GM18951 (cell line): ENCODE measurements at regions of chr19 and their contacts with region 1.

Region 1: DNA sequence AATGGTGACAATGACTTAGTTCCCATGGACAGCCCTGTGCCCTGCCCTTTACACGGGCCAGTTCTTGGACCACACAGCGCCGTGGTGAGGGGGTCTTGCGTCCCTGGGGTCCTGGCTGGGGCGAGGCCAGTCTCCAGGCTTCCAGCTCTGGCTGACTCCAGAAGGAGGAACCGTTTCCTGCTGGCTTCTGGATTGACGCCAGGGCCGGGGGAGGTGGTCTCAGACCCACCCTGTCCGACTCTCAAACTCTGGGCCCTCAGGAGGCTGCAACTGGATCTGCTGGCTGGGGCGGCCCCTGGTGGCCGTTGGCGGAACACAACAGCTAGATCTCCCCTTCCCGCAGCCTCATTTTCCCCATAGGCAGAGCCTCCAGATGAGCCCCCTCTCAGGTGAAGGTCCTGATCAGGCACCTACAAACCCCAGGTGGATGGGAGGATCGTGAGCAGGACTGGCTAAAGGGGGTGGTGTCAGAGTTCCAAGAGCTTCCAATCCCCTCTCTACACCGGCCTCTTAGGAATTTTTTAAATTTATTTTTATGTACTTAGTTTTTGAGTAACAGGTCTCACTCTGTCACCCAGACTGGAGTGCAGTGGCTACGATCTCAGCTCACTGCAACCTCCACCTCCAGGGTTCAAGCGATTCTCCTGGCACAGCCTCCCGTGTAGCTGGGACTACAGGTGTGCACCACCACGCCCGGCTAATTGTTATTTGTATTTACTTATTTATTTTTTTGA is 8.0 kb downstream of the CCDC194 start:
- POLR2A ChIP-seq: no peak

Region 2: DNA sequence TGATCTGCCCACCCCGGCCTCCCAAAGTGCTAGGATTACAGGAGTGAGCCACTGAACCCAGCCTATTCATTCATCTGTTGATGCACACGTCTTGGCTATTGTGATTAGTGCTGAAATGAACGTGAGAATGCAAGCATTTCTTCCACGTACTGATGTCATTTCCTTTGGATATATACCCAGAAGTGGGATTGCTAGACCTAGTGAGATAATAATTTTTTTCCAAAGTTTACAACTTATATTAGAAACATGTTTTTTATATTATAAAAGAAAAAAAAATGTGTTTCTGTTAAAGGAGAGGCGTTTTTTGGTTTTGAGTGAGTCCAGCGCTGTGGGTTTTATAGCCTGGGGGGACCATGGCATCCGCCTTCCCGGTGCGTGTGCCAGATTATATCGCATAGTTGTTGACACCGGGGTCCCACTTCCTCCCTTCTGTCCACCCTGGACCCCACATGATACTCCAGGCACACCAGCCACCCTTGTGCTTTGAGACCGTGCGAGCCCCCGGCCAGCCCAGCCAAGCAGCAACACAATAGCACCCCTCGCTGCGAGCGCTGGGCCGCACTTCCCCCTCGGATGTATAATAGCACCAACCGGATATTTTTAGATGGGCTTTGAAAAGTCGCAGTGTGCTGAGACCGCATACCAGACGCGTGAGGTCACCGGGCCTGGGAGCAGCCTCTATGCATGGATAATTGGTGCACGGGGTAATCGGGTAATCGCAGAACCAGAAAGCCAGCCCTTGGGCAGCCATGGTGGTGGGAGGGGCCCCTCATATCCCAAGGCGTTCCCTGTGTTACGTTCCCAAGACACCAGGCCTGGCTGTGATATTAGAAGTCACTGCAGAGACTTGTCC is 250.8 kb before region 1 on chr19:
- in situ Hi-C with region 1: no loop called
- POLR2A ChIP-seq: peak; percentile 11

Region 3: GRCh38 chr19:17282488-17283255 is 103.4 kb before region 1 on chr19:
- in situ Hi-C with region 1: no loop called
- POLR2A ChIP-seq: peak; percentile 44

Region 4: GRCh38 chr19:17334414-17335409 is 51.3 kb before region 1 on chr19 and contains the start of gene ANO8:
- in situ Hi-C with region 1: no loop called
- POLR2A ChIP-seq: peak; percentile 35

Region 5: GRCh38 chr19:17346109-17346671 is 39.9 kb before region 1 on chr19:
- in situ Hi-C with region 1: loop called (anchors 5 kb)
- POLR2A ChIP-seq: no peak